AG04449 (cell line): ENCODE measurements at regions of chr20 and their contacts with region 1.

Region 1: GRCh38 chr20:56554869-56555268 is 21.8 kb downstream of the FAM209B start:
- DNase-seq: peak; percentile 88
- H3K4me3 ChIP-seq: no peak overlapping the region
- CTCF ChIP-seq: no peak

Region 2: DNA sequence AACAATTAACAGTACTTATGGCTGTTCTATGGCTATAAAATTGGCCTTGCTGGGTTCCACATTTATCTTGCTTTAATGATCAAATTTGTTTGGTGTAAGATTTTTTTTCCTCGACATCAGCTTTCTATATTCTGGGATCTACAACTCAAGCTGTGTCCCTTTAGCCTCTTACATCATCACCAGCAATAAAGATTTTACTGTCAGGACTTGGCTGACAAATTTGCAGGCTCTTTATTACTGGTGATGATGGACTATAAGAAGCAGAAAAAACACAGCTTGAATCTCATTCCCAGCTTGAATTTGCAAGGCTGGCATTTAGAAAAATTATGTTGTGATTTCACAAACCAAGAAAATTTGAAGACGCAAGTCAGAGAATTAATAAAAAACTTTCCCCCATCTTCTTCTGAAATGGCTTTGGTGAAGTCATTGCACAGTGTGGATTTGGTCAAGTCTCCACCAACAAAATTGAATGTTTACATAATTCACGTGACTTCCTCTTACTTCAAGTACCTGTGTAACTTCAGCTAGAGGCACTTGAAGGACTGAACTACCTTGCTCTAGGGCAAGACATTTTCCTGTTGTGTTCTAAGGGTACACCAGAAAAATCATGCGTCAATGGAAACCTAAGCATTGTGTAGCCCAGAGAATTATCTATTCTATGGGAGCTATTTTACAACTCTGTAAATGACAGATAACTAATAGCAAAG is 724.6 kb before region 1 on chr20:
- CTCF ChIA-PET with region 1: no interaction called
- POLR2A ChIA-PET with region 1: no interaction called
- DNase-seq: no peak
- H3K4me3 ChIP-seq: no peak overlapping the region
- CTCF ChIP-seq: no peak

Region 3: DNA sequence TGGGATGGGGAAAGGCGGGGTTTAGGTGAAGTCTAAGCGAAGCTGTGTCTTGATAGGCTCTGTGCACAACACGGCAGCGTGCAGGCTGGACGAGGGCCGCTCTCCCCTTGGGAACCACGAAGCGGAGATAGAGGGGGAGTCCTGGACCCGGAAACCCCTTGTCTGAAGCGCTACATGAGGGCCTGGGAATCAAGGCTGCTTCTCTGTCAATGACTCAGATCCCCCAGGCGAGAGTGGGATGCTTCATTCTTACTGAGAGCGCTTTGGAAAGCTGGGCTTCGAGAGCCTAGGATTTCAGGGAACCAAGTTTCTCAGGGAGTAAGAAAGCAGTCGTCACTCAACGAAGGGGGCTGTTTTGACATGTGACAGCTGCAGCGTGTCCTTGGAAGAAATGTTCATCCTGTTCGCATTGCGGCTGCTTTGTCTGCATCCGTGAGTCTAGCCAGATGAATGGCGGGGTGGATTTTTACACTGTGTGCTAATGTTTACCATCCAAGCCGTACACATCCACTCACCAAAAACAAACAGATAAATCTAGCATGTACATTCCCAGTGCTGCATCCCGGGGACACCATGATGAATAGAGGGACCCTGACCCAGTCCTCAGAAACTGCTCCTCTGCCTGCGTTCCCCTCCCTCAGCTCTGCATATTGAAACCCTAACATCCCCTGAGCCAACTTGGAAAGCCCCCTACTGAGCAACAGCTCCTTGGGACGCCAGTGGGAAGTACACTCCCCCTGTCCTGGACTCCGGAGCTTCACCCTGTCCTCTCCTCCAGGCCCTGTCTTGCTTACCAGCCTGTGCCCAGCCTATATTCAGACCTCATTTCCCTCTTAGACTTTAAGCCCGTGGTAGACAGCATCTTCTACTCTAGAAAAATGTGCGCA is 111.0 kb before region 1 on chr20:
- CTCF ChIA-PET with region 1: no interaction called
- POLR2A ChIA-PET with region 1: no interaction called
- DNase-seq: no peak
- H3K4me3 ChIP-seq: no peak overlapping the region
- CTCF ChIP-seq: no peak

Region 4: GRCh38 chr20:56540420-56540819 is 14.4 kb before region 1 on chr20:
- CTCF ChIA-PET with region 1: interaction called, 30 read pairs
- POLR2A ChIA-PET with region 1: no interaction called
- DNase-seq: no peak
- H3K4me3 ChIP-seq: no peak overlapping the region
- CTCF ChIP-seq: no peak

Region 5: GRCh38 chr20:56579287-56579710 is 24.4 kb after region 1 on chr20:
- CTCF ChIA-PET with region 1: interaction called, 55 read pairs
- POLR2A ChIA-PET with region 1: no interaction called
- DNase-seq: no peak
- H3K4me3 ChIP-seq: no peak overlapping the region
- CTCF ChIP-seq: no peak

Region 6: DNA sequence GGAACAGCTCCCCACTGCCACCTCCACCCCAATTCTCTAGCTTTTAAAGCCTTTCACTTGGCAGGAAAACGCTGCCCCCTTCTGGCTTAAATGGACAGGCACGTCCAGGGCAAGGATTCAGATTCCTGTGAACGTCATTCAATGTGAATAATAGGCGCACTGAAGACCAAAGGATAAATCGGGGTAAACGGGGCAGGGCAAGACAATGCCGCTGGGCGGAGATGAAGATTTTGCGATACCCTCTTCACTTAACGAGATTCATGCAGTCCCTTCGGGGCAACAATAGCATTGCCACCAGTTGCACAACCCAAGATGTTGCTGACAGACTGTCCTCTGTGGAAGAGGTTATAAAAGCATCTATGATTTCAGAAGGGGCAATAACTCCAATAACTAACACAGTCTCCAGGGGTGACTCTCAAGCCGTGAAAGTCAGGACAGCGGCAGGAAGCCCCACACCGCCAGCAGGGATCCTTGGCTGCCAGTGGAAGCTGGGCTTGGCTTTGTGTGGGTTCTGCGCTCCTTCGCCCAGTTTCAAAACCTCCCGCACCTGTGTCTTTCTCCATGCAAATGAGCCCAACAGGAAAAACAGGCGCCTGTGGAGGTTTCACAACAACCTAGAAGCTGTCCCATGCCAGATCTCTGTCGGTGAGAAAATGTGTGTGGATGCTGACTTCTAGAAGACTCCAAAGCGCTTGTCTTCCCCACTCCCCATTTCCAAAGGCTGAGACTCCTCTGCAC is 419.8 kb after region 1 on chr20:
- CTCF ChIA-PET with region 1: interaction called, 78 read pairs
- POLR2A ChIA-PET with region 1: interaction called, 3 read pairs
- DNase-seq: peak; percentile 7
- H3K4me3 ChIP-seq: no peak overlapping the region
- CTCF ChIP-seq: peak; percentile 80

Region 7: DNA sequence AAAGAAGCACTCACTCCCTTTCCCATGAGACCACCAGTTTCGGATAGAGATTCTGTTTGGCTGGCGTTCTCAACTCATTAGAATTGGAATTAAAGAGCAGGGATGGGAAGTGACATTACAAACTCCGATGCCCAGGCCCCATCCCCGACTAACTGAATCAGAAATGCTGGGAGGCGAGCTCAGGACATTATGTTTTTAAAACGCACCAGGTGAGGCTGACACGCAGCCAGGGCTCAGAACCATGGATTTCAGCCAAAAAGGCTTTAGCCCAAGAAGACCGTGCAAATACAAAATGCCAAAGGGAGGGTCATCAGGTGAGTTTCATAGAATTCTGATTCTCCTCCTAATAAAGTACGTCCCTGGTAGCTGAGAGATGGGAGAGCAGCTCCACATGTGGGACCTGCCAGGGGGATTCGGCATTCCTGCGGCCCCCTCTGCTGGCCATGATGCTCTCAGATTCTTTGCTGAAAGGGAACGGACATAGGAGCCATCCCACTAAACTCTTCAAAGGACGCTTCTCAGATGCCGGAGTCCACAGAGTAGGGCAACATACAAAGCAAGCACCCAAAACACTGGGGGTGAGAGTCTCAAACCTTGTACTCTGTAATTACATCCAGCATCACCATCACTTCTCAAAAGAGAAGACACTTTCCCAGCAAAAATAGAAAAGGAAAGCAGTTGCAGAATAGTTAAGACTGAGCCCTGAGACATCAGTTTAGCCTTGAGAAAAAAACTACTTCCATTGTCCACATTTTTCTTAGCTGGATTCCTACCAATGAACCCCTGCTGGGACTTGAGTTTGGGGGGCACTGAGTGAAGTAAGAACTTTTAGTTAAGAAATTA is 506.4 kb after region 1 on chr20:
- CTCF ChIA-PET with region 1: interaction called, 22 read pairs
- POLR2A ChIA-PET with region 1: no interaction called
- DNase-seq: no peak
- H3K4me3 ChIP-seq: no peak overlapping the region
- CTCF ChIP-seq: peak; percentile 59

Region 8: DNA sequence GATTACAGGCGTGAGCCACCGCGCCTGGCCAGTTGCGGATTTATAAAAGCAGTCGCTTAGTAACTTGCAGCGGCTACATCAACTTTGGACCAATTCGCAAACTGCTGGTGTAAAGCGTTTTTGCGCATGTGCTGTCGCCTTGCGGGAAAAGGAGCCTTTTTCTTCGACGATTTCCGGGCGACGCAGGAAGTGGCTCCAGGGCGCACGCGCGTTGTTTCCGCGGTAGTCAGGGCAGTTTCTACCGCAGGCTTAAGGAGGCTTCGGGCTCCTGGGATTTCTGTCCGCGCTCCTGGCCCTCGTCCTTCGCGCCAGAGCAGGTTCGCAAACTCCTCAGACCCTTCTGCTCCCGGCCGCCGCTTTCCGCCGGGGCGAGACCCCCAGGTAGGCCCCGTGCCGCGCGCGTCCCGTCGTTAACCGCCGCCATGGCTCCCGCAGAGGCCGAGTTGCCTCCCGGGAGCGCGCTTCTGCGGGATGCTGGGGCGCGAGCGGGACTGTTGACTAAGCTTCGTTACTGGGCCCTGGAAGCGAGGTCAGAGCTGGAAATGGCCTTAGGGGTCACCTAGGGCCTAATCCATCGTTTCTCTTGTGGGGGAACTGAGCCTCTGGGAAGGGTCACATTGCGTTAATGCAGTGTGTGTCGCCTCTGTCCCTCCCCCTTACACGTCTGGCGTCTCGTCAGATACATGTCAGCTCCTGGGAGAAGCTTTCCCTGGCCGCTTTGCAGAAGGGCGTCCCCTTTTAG is 796.3 kb after region 1 on chr20 and contains the start of gene RAE1:
- CTCF ChIA-PET with region 1: interaction called, 39 read pairs
- POLR2A ChIA-PET with region 1: no interaction called
- DNase-seq: peak; percentile 63
- H3K4me3 ChIP-seq: peak within 1 kb of the TSS; percentile 100
- CTCF ChIP-seq: no peak